ENCODE measurements at regions of chr1 and their contacts with region 1.

Region 1: DNA sequence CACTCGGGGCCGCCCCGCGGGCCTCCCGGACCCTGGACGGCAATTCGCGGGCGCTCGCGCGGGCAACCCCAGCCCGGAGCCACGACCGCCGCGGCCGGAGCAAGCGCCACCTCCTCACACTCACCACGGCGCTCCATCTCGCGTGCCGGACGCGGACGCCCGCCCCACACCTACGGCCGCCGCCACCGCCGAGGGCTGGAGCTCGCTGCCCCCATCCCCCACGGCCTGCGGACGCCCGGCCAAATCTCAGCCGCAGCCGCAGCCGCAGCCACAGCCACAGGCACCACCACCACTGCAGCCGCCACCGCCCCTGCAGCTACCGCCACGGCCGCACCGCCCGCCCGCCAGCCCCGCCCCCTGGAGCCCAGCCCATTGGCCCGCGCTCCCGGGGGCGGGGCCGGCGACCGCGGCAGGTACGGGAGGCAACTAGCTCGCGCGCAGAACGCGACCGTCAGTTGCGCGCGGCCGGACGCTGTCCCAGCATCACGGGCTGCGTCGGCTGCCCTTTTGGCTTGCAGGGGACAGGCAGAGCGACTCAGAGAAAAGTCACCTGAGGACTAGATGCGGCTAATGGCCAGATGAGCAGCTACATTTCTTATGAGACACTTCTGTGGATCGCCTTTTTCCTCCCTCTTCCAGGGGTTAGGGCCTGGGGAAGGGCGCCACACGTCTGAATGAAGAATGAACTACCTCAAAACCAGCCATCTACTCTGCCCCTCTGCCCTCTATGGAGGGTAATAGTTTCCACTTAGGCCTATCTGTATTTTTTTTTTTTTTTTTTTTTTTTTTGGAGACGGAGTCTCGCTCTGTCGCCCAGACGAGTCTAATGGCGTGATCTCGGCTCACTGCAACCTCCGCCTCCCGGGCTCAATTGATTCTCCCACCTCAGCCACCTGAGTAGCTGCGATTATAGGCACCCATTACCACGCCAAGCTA is at the start of gene ARHGAP29:
- DNase-seq: peak; percentile 88 to 96
- H3K4me3 ChIP-seq: peak within 1 kb of the TSS; percentile 57 to 88 (median 86)
- H3K27ac ChIP-seq: peak within 1 kb of the TSS; percentile 87 to 98 (median 95)
- H3K4me1 ChIP-seq: peaks cover 0 to 53% (median 23%) of the 10 kb centered on the region in 4 donors
- H3K27me3 ChIP-seq: peaks cover 0 to 21% (median 0%) of the 10 kb centered on the region in 3 donors
- CTCF ChIP-seq: peak in 1 of 7 experiments; percentile 1
- EP300 ChIP-seq: no peak
- POLR2A ChIP-seq: no peak
- total RNA-seq, gene ARHGAP29: 8.1 to 90.9 (median 30.1) TPM

Region 2: GRCh38 chr1:94039514-94039870 is 198.1 kb before region 1 on chr1:
- intact Hi-C with region 1: loop called (anchors 10 kb)
- DNase-seq: peak; percentile 74 to 88
- H3K4me3 ChIP-seq: no peak overlapping the region
- H3K27ac ChIP-seq: peak overlapping the region in 1 of 5 donors; percentile 1
- H3K4me1 ChIP-seq: peaks cover 4 to 12% (median 5%) of the 10 kb centered on the region in 4 donors
- H3K27me3 ChIP-seq: peaks cover 0 to 4% (median 0%) of the 10 kb centered on the region in 3 donors
- CTCF ChIP-seq: peak in 5 of 7 experiments; percentile 7 to 76 (median 69)
- EP300 ChIP-seq: no peak
- POLR2A ChIP-seq: no peak

Region 3: GRCh38 chr1:94079080-94079940 is 158.2 kb before region 1 on chr1:
- intact Hi-C with region 1: loop called (anchors 10 kb)
- DNase-seq: no peak
- H3K4me3 ChIP-seq: no peak overlapping the region
- H3K27ac ChIP-seq: no peak overlapping the region
- H3K4me1 ChIP-seq: no peaks in the 10 kb centered on the region
- H3K27me3 ChIP-seq: no peaks in the 10 kb centered on the region
- CTCF ChIP-seq: no peak
- EP300 ChIP-seq: no peak
- POLR2A ChIP-seq: no peak

Region 4: DNA sequence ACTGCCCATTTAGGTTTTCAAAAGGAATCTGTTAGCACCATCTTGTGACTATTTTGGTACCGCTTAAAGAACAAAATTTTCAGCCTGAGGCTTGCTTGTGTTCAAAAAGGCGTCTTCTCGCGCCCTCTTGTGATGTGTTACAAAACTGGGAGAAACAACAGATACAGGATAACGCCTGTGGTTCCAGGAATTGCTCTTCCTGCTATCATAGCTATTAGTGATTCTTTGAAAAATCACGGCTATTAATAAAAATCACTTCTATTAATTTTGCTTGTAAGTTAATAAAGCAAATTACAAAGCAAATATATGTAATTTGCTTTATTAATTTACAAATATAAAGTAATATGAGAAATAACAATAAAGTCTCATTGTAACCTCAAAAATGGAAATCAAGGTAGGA is 98.4 kb after region 1 on chr1:
- intact Hi-C with region 1: loop called (anchors 10 kb)
- DNase-seq: peak; percentile 73 to 95
- H3K4me3 ChIP-seq: no peak overlapping the region
- H3K27ac ChIP-seq: no peak overlapping the region
- H3K4me1 ChIP-seq: peaks cover 0 to 25% (median 10%) of the 10 kb centered on the region in 4 donors
- H3K27me3 ChIP-seq: no peaks in the 10 kb centered on the region
- CTCF ChIP-seq: peak in 5 of 7 experiments; percentile 64 to 98 (median 75)
- EP300 ChIP-seq: no peak
- POLR2A ChIP-seq: no peak

Measured in stomach (tissue), 19 donors.